Mucosa of descending colon (tissue), 3 donors: ENCODE measurements at regions of chr1 and their contacts with region 1.

Region 1: GRCh38 chr1:89483010-89483756 is 41.4 kb upstream of the LRRC8B start:
- DNase-seq: peak in 2 of 3 donors; percentile 39 to 96
- ATAC-seq: peak; percentile 83
- H3K4me3 ChIP-seq: no peak overlapping the region
- H3K4me1 ChIP-seq: no peaks in the 10 kb centered on the region
- CTCF ChIP-seq: peak; percentile 25

Region 2: DNA sequence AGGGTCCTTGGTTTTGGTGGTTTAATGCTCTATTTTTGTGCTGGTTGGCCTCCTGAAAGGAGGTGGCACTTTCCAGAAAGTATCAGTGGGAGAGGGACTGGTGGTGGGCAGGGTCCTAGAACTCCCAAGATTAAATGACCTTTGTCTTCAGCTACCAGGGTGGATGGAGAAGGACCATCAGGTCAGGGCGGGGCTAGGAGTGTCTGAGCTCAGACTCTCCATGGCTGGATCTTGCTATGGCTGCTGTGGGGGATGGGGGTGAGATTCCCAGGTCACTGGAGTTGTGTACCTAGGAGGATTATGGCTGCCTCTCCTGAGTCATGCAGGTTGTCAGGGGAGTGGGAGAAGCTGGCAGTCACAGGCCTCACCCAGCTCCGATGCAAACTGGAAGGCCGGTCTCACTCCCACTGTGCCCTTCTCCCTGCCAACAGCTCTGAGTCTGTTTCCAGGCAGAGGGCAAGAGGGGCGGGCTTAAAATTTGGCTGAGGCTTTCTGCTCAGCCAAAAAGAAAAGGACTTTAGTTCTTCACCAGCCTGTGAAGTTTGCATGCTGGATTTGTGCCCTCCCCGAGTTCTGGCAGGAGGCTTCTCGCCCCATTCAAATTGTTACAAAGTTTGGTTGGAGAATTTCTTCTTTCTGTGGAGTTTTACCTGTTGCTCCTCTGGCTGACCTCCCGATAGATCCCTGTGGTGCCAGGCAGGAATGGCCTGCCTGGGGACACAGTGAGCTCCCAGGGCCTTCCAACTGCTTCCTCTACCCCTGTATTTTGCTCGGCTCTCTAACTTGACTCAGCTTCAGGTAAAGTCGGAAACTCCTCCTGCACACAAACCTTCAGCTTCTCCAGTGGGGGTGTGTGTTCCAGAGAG is 477.7 kb before region 1 on chr1:
- intact Hi-C with region 1: no loop called
- DNase-seq: peak in 1 of 3 donors; percentile 32
- ATAC-seq: no peak
- H3K4me3 ChIP-seq: no peak overlapping the region
- H3K4me1 ChIP-seq: no peaks in the 10 kb centered on the region
- CTCF ChIP-seq: no peak

Region 3: GRCh38 chr1:89605692-89606091 is 122.5 kb after region 1 on chr1:
- intact Hi-C with region 1: loop called in 1 of 2 experiments (anchors 10 kb)
- DNase-seq: no peak
- ATAC-seq: no peak
- H3K4me3 ChIP-seq: no peak overlapping the region
- H3K4me1 ChIP-seq: no peaks in the 10 kb centered on the region
- CTCF ChIP-seq: no peak